ENCODE measurements at regions of chr11 and their contacts with region 1.

Region 1: GRCh38 chr11:113796663-113797259 is 17.2 kb downstream of the CLDN25 start:
- DNase-seq: peak in 1 of 2 donors; percentile 35
- ATAC-seq: peak; percentile 80 to 93 (median 88)
- H3K4me3 ChIP-seq: no peak overlapping the region
- H3K27ac ChIP-seq: no peak overlapping the region
- H3K4me1 ChIP-seq: peaks cover 0 to 3% (median 0%) of the 10 kb centered on the region in 9 donors
- H3K27me3 ChIP-seq: no peaks in the 10 kb centered on the region
- CTCF ChIP-seq: peak; percentile 39 to 71 (median 62)

Region 2: GRCh38 chr11:113314389-113315301 is 482.1 kb before region 1 on chr11 and contains the start of gene TTC12:
- intact Hi-C with region 1: loop called in 5 of 10 experiments (anchors 5 to 10 kb)
- DNase-seq: peak; percentile 94 to 96
- ATAC-seq: peak; percentile 100
- H3K4me3 ChIP-seq: peak within 1 kb of the TSS; percentile 54 to 92 (median 76)
- H3K27ac ChIP-seq: peak within 1 kb of the TSS; percentile 66 to 92 (median 88)
- H3K4me1 ChIP-seq: peaks cover 3 to 19% (median 17%) of the 10 kb centered on the region in 9 donors
- H3K27me3 ChIP-seq: no peaks in the 10 kb centered on the region
- CTCF ChIP-seq: no peak
- total RNA-seq, gene TTC12: 3.5 to 18.0 (median 8.4) TPM

Region 3: DNA sequence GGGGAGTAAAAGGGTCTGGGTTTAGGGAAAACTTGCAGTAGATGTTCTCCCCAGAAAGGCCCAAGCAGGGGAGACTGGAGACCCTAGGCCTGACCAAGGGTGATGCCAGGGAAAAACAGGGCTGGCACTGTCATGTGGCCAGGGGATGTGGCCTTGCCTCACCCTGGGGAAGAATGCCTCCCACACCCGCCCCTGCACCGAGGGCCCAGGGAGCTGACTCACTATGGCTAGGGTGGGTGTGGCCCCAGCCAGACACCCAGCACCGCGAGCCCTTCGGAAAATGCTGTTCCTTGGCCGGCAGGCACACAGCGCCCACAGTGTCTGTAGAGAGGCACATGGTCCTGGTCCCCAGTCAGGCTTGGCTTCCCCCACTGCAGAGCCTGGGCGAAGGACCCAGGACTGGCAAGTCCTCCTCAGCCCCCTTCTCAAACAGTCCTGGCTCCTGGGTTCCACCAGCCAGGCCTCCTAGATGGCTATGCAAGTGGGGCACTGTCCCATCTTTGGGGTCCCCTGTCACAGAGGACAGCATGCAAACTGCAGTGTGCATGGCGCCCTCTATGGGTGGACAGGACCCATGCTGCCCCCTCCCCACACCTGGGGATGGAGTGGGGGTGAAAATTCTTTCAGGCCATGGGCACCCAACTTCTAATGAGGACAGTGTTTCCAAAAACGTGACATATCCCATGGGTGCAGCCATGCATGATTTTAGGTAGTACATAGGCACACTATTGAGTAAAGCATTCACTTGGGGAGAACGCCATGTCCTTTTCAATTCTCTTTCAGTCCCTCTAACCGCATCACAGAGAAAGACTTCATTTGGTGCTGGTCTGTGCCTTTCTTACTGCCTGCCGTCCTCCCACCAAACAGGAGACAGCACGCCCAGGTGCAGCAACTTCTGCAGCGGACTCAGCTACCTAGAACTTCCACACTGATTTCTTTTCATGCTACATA is 105.9 kb before region 1 on chr11:
- intact Hi-C with region 1: no loop called
- DNase-seq: no peak
- ATAC-seq: peak in 6 of 8 donors; percentile 46 to 87 (median 64)
- H3K4me3 ChIP-seq: no peak overlapping the region
- H3K27ac ChIP-seq: no peak overlapping the region
- H3K4me1 ChIP-seq: no peaks in the 10 kb centered on the region
- H3K27me3 ChIP-seq: no peaks in the 10 kb centered on the region
- CTCF ChIP-seq: peak in 7 of 9 donors; percentile 29 to 52 (median 42)